Vagina (tissue), 2 donors: ENCODE measurements at regions of chr9 and their contacts with region 1.

Region 1: DNA sequence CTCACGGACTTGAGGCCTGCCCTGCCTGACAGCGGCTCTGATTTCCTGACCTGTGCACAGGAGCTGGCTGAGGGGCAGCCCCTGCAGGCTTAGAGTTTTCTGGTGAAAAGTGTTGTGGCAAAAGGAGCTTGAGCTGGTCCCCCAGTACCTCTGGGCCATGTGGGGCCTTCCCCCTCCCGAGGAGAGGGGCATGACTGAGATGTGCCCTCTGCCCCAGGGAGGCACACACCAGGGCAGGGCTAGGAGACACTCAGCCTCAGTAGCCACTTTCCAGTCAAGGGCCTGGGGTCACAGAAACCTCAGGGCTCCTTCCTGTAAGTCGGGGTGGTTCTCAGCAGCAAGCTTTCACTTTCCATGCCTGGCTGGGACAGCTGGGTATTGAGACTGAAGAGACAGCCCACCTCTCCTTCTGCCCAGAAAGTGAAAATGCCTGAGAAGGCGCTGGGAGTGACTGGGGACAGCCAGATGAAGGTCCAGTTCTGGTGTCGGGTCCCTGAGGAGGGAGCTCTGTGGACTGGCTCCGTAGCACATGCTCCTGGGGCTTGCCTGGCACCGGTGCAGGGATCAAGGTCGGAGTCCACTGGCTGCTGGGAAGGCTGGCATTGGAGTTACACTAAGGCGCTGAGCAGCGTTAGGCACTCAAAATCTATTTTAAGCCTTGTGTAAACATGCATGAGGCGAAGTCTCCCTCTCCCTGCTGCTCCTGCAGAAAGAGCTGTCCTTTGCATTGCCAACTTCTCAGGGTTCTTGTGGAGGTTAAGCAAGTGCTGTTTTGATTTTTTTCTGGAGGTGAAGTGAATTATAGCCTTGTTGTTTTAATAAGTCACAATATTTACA is 394.9 kb downstream of the GADD45G start:
- DNase-seq: peak in 1 of 2 donors; percentile 95
- H3K4me3 ChIP-seq: peak overlapping the region; percentile 26 to 34
- H3K27ac ChIP-seq: peak overlapping the region; percentile 90
- H3K4me1 ChIP-seq: peaks cover 60% of the 10 kb centered on the region
- H3K27me3 ChIP-seq: no peaks in the 10 kb centered on the region
- CTCF ChIP-seq: no peak
- POLR2A ChIP-seq: no peak

Region 2: DNA sequence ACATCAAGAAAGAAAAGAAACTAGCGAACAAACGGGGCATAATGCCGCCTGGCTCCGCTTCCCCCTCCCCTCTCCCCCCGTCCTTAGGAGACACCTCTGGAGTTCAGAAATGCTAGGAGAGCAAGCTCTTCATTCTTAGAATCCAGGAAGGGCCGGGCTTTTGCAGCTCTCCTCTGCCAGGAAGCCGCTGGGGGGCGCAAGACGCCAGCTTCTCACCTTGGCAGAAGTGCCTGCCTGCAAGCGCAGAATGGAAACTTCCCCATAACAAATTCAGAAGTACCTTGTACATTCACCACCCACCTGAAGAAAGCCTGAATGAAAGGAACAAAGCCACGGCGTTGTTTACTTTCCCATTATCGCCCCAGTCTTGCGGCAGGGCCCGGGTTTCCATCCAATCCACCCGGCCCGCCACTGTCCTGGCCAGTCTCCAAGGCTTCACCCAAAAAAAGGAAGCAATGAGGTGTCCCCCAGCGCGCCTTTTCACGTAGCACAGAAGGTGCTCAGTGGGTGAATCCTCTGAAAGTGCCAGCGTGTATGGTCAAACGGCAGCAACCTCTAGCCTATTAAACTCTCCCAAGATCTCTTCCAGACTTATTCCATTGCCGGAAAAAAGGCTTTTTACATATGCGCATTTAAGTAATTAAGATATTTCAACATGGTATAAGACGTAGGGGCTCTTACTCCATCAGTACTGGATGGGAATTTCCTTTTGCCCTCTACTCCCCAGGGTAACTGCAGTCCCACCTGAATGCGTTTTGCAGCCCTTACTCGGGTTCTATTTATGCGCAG is 396.6 kb before region 1 on chr9:
- intact Hi-C with region 1: loop called (anchors 10 kb)
- DNase-seq: peak in 1 of 2 donors; percentile 92
- H3K4me3 ChIP-seq: peak overlapping the region; percentile 74 to 89
- H3K27ac ChIP-seq: peak overlapping the region; percentile 83
- H3K4me1 ChIP-seq: peaks cover 34% of the 10 kb centered on the region
- H3K27me3 ChIP-seq: no peaks in the 10 kb centered on the region
- CTCF ChIP-seq: peak; percentile 66 to 85 (median 77)
- POLR2A ChIP-seq: no peak

Region 3: DNA sequence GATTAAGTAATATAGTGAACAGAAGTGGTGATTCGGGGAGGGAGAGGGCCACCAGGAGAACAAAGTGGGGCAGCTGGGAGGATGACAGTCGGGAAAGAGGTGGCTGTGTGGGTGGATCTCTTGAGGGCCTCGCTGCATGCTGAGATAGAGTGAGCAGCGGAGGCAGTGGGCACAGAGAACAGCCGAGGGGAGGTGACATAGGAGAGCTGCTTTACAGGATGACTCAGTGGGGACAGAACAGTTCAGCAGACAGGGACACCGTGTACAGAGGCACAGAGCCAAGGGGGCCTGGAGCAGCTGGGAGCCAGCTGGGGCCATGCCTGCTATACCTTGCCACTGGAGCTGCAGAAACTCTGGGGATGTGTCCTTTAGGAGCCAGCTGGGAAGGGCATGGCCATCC is 121.1 kb before region 1 on chr9:
- intact Hi-C with region 1: loop called (anchors 10 kb)
- DNase-seq: no peak
- H3K4me3 ChIP-seq: no peak overlapping the region
- H3K27ac ChIP-seq: no peak overlapping the region
- H3K4me1 ChIP-seq: peaks cover 50% of the 10 kb centered on the region
- H3K27me3 ChIP-seq: no peaks in the 10 kb centered on the region
- CTCF ChIP-seq: no peak
- POLR2A ChIP-seq: no peak